Ascending aorta (tissue), 2 donors: ENCODE measurements at regions of chr11 and their contacts with region 1.

Region 1: GRCh38 chr11:8033305-8034105 is 46.4 kb downstream of the EIF3F start:
- DNase-seq: peak in 1 of 2 donors; percentile 83
- H3K4me3 ChIP-seq: no peak overlapping the region
- H3K27ac ChIP-seq: no peak overlapping the region
- H3K4me1 ChIP-seq: peaks cover 0 to 6% of the 10 kb centered on the region in 2 donors
- H3K27me3 ChIP-seq: no peaks in the 10 kb centered on the region
- CTCF ChIP-seq: peak; percentile 67 to 93 (median 78)

Region 2: GRCh38 chr11:7376386-7376785 is 657.1 kb before region 1 on chr11:
- intact Hi-C with region 1: no loop called
- DNase-seq: no peak
- H3K4me3 ChIP-seq: no peak overlapping the region
- H3K27ac ChIP-seq: no peak overlapping the region
- H3K4me1 ChIP-seq: no peaks in the 10 kb centered on the region
- H3K27me3 ChIP-seq: no peaks in the 10 kb centered on the region
- CTCF ChIP-seq: no peak

Region 3: GRCh38 chr11:7714786-7715185 is 318.7 kb before region 1 on chr11:
- intact Hi-C with region 1: no loop called
- DNase-seq: no peak
- H3K4me3 ChIP-seq: no peak overlapping the region
- H3K27ac ChIP-seq: no peak overlapping the region
- H3K4me1 ChIP-seq: no peaks in the 10 kb centered on the region
- H3K27me3 ChIP-seq: no peaks in the 10 kb centered on the region
- CTCF ChIP-seq: no peak

Region 4: GRCh38 chr11:8090756-8091155 is 57.3 kb after region 1 on chr11:
- intact Hi-C with region 1: loop called (anchors 2 kb)
- DNase-seq: peak in 1 of 2 donors; percentile 61
- H3K4me3 ChIP-seq: no peak overlapping the region
- H3K27ac ChIP-seq: no peak overlapping the region
- H3K4me1 ChIP-seq: no peaks in the 10 kb centered on the region
- H3K27me3 ChIP-seq: no peaks in the 10 kb centered on the region
- CTCF ChIP-seq: peak in 2 of 3 experiments; percentile 24 to 56

Region 5: GRCh38 chr11:8099291-8099899 is 65.9 kb after region 1 on chr11:
- intact Hi-C with region 1: loop called (anchors 2 kb)
- DNase-seq: peak in 1 of 2 donors; percentile 86
- H3K4me3 ChIP-seq: no peak overlapping the region
- H3K27ac ChIP-seq: no peak overlapping the region
- H3K4me1 ChIP-seq: no peaks in the 10 kb centered on the region
- H3K27me3 ChIP-seq: no peaks in the 10 kb centered on the region
- CTCF ChIP-seq: peak; percentile 59 to 77 (median 65)

Region 6: GRCh38 chr11:8289492-8289918 is 256.0 kb after region 1 on chr11:
- intact Hi-C with region 1: no loop called
- DNase-seq: peak in 1 of 2 donors; percentile 47
- H3K4me3 ChIP-seq: no peak overlapping the region
- H3K27ac ChIP-seq: no peak overlapping the region
- H3K4me1 ChIP-seq: no peaks in the 10 kb centered on the region
- H3K27me3 ChIP-seq: no peaks in the 10 kb centered on the region
- CTCF ChIP-seq: no peak